ENCODE measurements at regions of chr18 and their contacts with region 1.

Region 1: DNA sequence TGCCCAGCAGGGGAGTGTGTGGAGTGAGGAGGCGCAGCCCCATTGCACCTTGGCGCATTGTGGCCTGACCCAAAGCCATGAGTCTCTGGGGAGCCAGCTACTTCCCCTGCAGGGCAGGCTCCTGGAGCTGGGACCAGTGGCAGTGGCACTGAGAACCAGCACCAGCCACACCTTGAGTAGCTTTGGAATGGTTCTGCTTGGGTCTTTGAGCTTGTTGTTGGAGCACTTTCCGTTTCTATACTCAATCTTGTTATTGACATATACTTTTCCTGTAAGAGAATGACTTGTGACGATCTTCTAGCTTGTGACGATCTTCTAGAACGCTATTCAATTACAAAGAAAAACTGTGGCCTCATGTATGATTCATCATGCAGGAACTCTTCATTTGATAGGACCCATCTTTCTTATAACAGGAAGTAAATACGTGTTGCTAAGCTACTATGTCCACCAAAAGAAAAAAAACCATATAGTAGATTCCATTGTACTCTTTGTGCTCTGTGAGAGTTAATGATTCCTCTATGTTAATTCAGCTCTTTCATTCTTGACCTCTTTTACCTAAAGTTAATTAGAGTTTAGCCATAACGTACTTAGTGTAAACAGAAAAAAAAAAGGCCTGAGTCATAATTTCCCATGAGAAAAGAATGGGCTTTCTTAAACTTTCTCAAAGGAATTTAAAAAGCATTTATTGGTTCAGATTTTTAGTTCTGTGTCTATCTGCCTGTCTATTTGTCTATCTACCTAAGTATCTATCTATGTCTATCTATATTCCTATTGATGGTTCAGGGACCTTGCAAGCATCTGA is 113.1 kb downstream of the GATA6 start:
- DNase-seq: peak; percentile 96
- H3K4me3 ChIP-seq: no peak overlapping the region
- H3K27ac ChIP-seq: peak overlapping the region; percentile 93
- H3K4me1 ChIP-seq: peaks cover 20% of the 10 kb centered on the region
- H3K27me3 ChIP-seq: no peaks in the 10 kb centered on the region
- CTCF ChIP-seq: peak in 1 of 2 donors; percentile 15
- POLR2A ChIP-seq: no peak

Region 2: GRCh38 chr18:21575656-21576055 is 706.9 kb before region 1 on chr18:
- CTCF ChIA-PET with region 1: no interaction called
- POLR2A ChIA-PET with region 1: no interaction called
- dilution Hi-C with region 1: no loop called
- intact Hi-C with region 1: no loop called
- DNase-seq: peak; percentile 53
- H3K4me3 ChIP-seq: no peak overlapping the region
- H3K27ac ChIP-seq: no peak overlapping the region
- H3K4me1 ChIP-seq: peaks cover 11% of the 10 kb centered on the region
- H3K27me3 ChIP-seq: no peaks in the 10 kb centered on the region
- CTCF ChIP-seq: no peak
- POLR2A ChIP-seq: no peak

Region 3: DNA sequence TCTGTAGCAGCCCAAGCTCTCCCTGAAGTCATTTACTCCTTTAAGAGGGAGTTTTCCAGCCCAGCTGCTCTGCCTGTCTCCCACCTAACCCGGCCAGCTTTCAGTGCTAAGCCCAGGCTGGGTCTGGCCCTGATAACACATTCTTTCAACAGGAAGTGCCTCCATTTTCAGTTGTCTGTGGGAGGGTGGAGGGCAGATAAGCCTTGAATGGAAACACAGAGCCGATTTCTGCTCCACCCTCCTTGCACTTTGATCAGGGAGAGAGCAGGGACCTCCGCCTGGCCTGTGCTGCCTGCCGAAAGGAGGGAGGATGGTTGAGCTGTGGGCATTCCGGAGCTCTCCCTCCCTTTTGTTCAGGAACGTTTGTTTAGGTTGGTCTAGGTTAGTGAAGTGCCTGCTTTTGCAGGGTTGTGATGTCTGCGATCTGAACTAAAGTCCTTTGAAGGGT is 88.3 kb before region 1 on chr18:
- CTCF ChIA-PET with region 1: no interaction called
- POLR2A ChIA-PET with region 1: no interaction called
- dilution Hi-C with region 1: no loop called
- intact Hi-C with region 1: loop called (anchors 1 kb)
- DNase-seq: peak; percentile 79
- H3K4me3 ChIP-seq: no peak overlapping the region
- H3K27ac ChIP-seq: peak overlapping the region; percentile 83
- H3K4me1 ChIP-seq: peaks cover 62% of the 10 kb centered on the region
- H3K27me3 ChIP-seq: no peaks in the 10 kb centered on the region
- CTCF ChIP-seq: no peak
- POLR2A ChIP-seq: no peak

Region 4: DNA sequence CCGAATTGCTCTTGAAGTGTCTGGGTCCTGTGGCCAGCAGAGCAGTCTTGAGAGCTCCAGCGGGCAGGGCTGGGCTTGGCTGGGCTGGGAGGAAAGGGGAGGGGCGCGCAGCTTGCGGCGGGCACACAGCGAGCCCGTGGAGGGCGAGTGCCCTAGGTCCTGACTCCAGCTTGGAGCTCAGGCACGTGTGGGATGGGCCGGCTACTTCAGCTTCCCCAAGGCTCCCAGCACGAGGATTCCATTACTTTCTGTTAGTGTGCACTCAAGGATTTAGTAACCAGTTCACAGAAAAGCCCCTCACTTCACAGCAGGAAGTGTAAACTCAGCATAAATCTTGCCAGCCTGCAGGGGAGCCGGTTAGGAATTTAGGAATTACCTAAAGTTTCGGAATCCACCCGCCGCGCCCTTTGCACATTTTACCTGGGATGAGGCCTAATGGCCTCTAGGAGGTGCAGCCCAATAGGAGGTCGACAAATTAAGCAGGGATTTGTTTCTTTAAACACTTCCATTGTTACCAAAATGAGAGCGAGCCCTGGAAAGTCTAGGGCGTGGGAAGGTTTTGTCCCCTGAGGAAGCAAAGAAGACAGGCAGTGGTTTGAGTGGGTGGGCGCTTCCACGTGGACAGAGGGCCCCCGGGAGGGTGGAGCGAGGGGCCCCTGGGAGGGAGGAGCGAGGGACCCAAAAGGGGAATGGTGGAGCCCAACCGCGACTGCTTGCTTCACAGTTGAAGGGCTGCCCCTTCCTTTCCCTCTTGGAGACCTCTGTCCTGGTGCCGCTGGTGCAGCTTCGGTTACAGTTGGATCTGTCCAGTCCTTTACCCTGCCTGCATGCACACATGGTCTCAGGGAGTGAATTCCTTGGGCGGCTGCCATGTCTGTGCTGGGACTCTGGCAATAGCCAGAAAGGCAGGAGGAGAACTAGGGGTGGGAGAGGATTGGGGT is 41.9 kb after region 1 on chr18:
- CTCF ChIA-PET with region 1: no interaction called
- POLR2A ChIA-PET with region 1: no interaction called
- dilution Hi-C with region 1: no loop called
- intact Hi-C with region 1: no loop called
- DNase-seq: peak; percentile 72
- H3K4me3 ChIP-seq: peak overlapping the region in 1 of 3 experiments; percentile 45
- H3K27ac ChIP-seq: no peak overlapping the region
- H3K4me1 ChIP-seq: peaks cover 5% of the 10 kb centered on the region
- H3K27me3 ChIP-seq: no peaks in the 10 kb centered on the region
- CTCF ChIP-seq: no peak
- POLR2A ChIP-seq: no peak

Region 5: DNA sequence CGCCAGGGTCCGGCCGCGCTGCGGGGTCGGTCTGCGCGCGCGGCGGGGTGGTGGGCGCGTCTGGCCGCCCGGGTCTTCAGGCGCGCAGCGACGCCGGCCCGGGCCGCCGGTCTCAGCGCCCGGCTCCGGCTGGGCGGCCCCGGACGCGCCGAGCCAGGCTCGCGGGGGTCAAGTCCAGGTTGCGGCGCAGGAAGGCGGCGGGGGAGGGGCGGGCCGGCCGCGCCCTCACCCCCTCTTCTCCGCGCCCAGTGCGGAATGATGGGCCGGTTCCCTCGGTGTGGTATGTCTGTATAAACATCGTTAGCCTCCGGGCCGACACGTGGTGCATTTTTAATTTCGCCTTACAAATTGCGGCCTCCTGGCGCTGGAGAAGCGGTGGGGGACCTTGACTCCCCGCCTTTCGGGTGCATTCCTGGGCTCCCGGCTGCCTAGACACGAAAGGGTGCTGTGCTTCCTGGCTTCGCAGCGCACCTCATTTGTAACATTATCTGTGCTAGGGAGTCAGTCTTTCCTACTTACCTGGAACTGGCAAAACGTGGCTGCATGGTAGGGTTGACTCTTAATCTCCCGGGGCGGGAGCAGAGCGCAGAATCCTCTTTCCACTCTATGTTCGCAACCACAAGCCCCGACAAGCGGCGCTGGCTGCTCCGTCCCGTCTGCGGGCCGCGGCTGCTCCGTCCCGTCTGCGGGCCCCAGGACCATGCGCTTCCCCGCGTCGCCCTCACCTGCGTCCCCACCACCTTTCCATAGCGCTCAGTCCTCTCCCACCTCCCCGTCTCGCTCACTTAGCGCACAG is 66.2 kb after region 1 on chr18:
- CTCF ChIA-PET with region 1: interaction called, 4 read pairs
- POLR2A ChIA-PET with region 1: no interaction called
- dilution Hi-C with region 1: no loop called
- intact Hi-C with region 1: loop called (anchors 1 kb)
- DNase-seq: peak; percentile 56
- H3K4me3 ChIP-seq: peak overlapping the region in 2 of 3 experiments; percentile 33 to 35
- H3K27ac ChIP-seq: peak overlapping the region; percentile 67
- H3K4me1 ChIP-seq: peaks cover 56% of the 10 kb centered on the region
- H3K27me3 ChIP-seq: no peaks in the 10 kb centered on the region
- CTCF ChIP-seq: no peak
- POLR2A ChIP-seq: no peak

Region 6: GRCh38 chr18:22399949-22400348 is 117.4 kb after region 1 on chr18:
- CTCF ChIA-PET with region 1: no interaction called
- POLR2A ChIA-PET with region 1: no interaction called
- dilution Hi-C with region 1: no loop called
- intact Hi-C with region 1: loop called (anchors 5 kb)
- DNase-seq: peak; percentile 69
- H3K4me3 ChIP-seq: no peak overlapping the region
- H3K27ac ChIP-seq: peak overlapping the region; percentile 84
- H3K4me1 ChIP-seq: peaks cover 24% of the 10 kb centered on the region
- H3K27me3 ChIP-seq: no peaks in the 10 kb centered on the region
- CTCF ChIP-seq: no peak
- POLR2A ChIP-seq: no peak

Region 7: DNA sequence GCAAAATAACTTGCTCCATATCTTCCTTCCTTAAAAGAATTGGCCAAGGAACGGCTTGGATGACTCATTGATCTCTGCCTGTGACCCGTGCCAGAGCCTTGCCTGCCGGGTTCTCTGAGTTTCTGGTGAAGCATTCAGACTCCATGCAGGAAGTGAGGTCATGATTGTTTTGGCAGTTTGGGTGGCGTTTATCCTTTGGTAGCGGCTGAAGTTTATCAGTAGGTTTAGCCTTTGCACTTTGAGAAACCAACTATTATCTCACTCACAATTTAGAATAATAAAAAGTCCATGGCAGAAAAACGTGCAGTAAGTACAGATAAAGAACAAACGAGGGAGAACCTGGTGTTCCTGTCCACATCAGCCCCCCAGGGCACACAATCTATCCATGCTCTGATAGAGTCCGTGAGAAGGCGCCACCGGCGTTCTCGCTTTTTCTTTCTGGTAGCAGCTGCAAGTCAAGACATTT is 150.2 kb after region 1 on chr18:
- CTCF ChIA-PET with region 1: no interaction called
- POLR2A ChIA-PET with region 1: no interaction called
- dilution Hi-C with region 1: no loop called
- intact Hi-C with region 1: loop called (anchors 1 kb)
- DNase-seq: peak; percentile 93
- H3K4me3 ChIP-seq: no peak overlapping the region
- H3K27ac ChIP-seq: peak overlapping the region; percentile 67
- H3K4me1 ChIP-seq: peaks cover 25% of the 10 kb centered on the region
- H3K27me3 ChIP-seq: no peaks in the 10 kb centered on the region
- CTCF ChIP-seq: no peak
- POLR2A ChIP-seq: peak; percentile 46

Region 8: GRCh38 chr18:22451796-22452195 is 169.3 kb after region 1 on chr18:
- CTCF ChIA-PET with region 1: no interaction called
- POLR2A ChIA-PET with region 1: no interaction called
- dilution Hi-C with region 1: no loop called
- intact Hi-C with region 1: loop called (anchors 1 kb)
- DNase-seq: peak; percentile 29
- H3K4me3 ChIP-seq: no peak overlapping the region
- H3K27ac ChIP-seq: peak overlapping the region; percentile 74
- H3K4me1 ChIP-seq: peaks cover 9% of the 10 kb centered on the region
- H3K27me3 ChIP-seq: no peaks in the 10 kb centered on the region
- CTCF ChIP-seq: no peak
- POLR2A ChIP-seq: no peak

Region 9: DNA sequence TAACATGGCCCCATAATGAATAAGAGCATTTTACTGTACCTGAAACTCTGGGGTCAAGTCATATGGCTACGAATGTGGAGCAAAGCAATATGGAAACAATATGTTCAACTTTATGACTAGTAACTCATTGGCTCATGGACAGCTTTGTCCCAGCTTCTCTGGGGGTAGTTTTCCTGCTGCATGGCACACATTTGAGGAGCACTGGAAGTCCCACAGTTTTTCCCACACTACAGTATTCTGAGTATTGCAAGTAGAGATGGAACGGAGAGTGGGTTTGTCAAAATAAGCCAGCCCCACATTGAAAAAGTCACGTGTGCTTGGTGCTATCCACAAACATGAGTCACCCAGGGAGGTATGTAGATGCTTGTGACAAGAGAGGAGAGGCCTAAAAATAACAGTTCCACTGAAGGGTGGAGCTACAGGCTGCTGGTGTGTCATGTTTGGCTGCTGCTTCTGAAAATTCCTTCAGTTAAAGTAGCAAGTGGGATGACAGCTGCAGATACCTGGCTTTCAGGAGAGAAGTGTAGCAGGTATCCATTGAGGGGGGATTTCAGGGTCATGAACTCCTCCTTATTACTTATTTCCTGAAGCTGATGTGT is 183.4 kb after region 1 on chr18:
- CTCF ChIA-PET with region 1: no interaction called
- POLR2A ChIA-PET with region 1: no interaction called
- dilution Hi-C with region 1: no loop called
- intact Hi-C with region 1: loop called (anchors 1 kb)
- DNase-seq: peak; percentile 73
- H3K4me3 ChIP-seq: no peak overlapping the region
- H3K27ac ChIP-seq: peak overlapping the region; percentile 97
- H3K4me1 ChIP-seq: peaks cover 49% of the 10 kb centered on the region
- H3K27me3 ChIP-seq: no peaks in the 10 kb centered on the region
- CTCF ChIP-seq: no peak
- POLR2A ChIP-seq: no peak

Region 10: DNA sequence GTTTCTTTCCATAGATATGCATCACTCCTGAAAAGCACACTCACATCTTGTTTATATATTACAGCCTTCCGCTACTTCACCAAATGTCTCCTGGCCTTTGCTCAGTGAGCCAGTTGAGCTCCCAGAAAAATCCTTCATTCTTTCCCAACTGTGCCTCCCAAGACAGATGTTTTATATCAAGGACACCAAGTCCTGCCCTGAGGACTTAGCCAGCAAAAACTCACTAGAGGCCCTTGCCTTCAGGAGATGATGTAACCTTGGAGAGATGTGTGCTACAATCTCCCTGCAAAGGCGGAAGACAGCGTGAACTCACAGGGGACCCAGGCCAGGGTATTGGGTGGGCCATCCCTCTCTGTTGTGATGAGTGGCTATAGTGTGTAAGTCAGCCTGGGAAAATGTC is 221.3 kb after region 1 on chr18:
- CTCF ChIA-PET with region 1: no interaction called
- POLR2A ChIA-PET with region 1: no interaction called
- dilution Hi-C with region 1: no loop called
- intact Hi-C with region 1: no loop called
- DNase-seq: no peak
- H3K4me3 ChIP-seq: no peak overlapping the region
- H3K27ac ChIP-seq: no peak overlapping the region
- H3K4me1 ChIP-seq: peaks cover 8% of the 10 kb centered on the region
- H3K27me3 ChIP-seq: no peaks in the 10 kb centered on the region
- CTCF ChIP-seq: no peak
- POLR2A ChIP-seq: no peak

Measured in endothelial cell of umbilical vein (primary cell).